ENCODE measurements at regions of chr19 and their contacts with region 1.

Region 1: DNA sequence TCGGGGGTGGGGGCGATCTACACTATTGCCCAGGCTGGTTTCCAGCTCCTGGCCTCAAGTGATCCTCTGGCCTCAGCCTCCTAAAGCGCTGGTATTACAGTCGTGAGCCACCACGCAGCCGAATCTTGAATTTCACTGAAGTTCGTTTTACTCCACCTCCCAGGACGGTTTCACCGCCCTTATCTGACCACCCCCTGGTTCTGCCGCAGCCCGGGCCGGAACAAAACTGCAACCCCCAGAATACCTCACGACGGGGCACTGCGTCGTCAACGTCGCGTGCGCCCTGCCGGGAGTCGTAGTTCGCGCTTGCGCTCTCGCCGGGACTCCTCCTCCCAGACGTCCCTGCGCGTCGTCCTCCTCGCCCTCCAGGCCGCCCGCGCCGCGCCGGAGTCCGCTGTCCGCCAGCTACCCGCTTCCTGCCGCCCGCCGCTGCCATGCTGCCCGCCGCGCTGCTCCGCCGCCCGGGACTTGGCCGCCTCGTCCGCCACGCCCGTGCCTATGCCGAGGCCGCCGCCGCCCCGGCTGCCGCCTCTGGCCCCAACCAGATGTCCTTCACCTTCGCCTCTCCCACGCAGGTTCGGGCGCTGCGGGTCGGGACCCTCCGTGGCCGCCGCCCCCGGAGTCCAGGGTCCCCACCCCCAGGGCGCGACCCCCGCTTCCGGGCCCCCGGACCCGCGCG is at the start of gene ATP5F1D:
- DNase-seq: peak; percentile 96
- CTCF ChIP-seq: no peak

Region 2: DNA sequence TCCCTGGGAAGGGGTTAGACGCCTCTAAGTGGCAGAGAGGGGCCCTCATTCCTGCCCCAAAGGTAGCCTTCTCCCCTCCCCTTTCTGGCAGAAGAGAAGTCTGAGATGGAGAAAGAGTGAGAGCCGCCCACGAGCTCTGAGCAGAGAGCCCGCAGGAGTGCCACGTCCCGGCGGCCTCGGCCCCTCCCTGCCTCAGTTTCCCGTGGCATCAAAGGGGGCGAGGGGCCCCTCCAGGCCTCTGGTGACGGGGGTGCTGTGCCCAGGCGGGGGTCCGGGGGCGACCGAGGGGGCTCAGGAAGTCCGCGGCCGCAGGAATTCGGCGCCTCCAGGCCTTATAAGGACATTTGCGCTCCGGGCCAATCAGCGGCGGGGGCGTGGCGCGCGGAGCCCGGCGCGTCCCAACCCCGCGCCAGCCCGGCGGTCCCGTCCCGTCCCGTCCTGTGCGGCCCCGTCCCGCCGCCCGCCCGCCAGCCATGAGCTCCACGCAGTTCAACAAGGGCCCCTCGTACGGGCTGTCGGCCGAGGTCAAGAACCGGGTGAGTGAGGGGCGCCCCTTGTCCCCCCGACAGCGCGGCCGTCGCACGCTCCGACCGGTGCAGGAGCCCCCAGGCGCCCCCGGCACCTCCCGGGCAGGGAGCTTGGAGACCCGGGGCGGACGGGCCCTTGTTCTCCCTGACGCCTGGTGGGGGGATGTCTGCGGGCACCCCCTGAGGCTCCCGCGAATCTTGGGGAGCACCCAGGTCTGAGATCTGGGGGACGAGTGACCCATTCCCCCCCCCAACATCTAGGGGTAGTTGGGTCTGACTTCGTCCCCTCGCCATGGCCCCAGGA is 215.2 kb before region 1 on chr19 and contains the start of gene CNN2:
- CTCF ChIA-PET with region 1: interaction called, 17 read pairs
- POLR2A ChIA-PET with region 1: no interaction called
- DNase-seq: peak; percentile 88
- CTCF ChIP-seq: no peak

Region 3: GRCh38 chr19:1113033-1113985 is 128.2 kb before region 1 on chr19:
- CTCF ChIA-PET with region 1: interaction called, 18 read pairs
- POLR2A ChIA-PET with region 1: interaction called, 4 read pairs
- DNase-seq: peak; percentile 97
- CTCF ChIP-seq: peak; percentile 85

Region 4: DNA sequence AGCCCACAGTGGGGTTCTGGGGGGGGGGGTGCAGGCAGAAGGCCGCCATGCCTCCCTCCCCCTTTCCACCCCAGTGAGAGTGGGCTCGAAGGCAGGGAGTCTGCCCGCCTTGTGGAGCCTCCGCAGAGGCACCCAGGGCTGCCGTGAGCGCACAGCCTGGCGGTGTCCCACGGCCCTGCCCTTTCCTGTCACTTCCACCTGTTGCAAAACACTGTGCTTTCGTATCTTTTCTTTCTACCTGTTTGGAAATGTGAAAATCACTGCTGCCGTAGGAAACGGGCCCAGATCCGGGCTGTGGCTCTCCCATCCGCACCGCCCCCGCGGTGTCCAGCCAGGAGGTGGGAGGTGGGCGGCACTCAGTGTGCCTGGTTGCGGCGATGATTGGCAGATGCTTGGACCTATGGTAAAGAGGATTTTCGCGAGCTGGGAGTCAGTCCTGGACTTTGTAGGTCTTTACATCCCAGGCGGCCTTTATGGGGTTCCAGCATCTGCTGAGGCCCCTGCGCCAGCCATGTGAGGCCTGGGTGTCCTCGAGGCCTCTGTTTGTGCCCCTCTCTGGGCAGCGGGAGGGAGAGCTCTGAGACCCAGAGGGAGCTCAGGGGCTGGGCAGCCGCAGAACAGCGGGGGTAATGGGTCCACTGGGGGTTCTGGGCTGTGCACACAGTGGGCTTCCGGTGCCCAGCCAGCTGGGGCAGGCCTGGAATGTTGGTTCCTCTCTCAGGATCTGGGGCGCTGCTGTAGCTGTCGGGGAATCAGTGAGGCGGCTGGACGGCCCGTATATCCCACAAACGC is 29.9 kb before region 1 on chr19:
- CTCF ChIA-PET with region 1: interaction called, 16 read pairs
- POLR2A ChIA-PET with region 1: no interaction called
- DNase-seq: no peak
- CTCF ChIP-seq: no peak

Region 5: GRCh38 chr19:1217366-1217765 is 24.2 kb before region 1 on chr19:
- CTCF ChIA-PET with region 1: interaction called, 16 read pairs
- POLR2A ChIA-PET with region 1: no interaction called
- DNase-seq: no peak
- CTCF ChIP-seq: no peak

Region 6: GRCh38 chr19:1269065-1269477 is 27.5 kb after region 1 on chr19 and contains the start of gene CIRBP:
- CTCF ChIA-PET with region 1: interaction called, 491 read pairs
- POLR2A ChIA-PET with region 1: interaction called, 65 read pairs
- DNase-seq: peak; percentile 98
- CTCF ChIP-seq: no peak

Region 7: GRCh38 chr19:1275260-1275975 is 33.9 kb after region 1 on chr19 and contains the start of gene FAM174C:
- CTCF ChIA-PET with region 1: interaction called, 48 read pairs
- POLR2A ChIA-PET with region 1: interaction called, 6 read pairs
- DNase-seq: peak; percentile 94
- CTCF ChIP-seq: no peak

Region 8: GRCh38 chr19:1307755-1308313 is 66.3 kb after region 1 on chr19:
- CTCF ChIA-PET with region 1: no interaction called
- POLR2A ChIA-PET with region 1: no interaction called
- DNase-seq: no peak
- CTCF ChIP-seq: no peak

Region 9: GRCh38 chr19:1503089-1503933 is 261.8 kb after region 1 on chr19:
- CTCF ChIA-PET with region 1: no interaction called
- POLR2A ChIA-PET with region 1: no interaction called
- DNase-seq: peak; percentile 80
- CTCF ChIP-seq: peak; percentile 71

Region 10: GRCh38 chr19:1592755-1593500 is 351.4 kb after region 1 on chr19 and contains the start of gene MBD3:
- CTCF ChIA-PET with region 1: no interaction called
- POLR2A ChIA-PET with region 1: no interaction called
- DNase-seq: peak; percentile 98
- CTCF ChIP-seq: no peak